SK-N-SH (cell line): ENCODE measurements at regions of chr13 and their contacts with region 1.

Region 1: GRCh38 chr13:20713751-20714150 is 10.3 kb downstream of the IL17D start:
- DNase-seq: no peak
- H3K4me3 ChIP-seq: no peak overlapping the region
- H3K27ac ChIP-seq: peak overlapping the region in 1 of 2 experiments; percentile 86; a peak in 3 of 4 replicates
- H3K4me1 ChIP-seq: peaks cover 0 to 27% of the 10 kb centered on the region in 2 experiments; a peak in 3 of 4 replicates
- H3K27me3 ChIP-seq: no peaks in the 10 kb centered on the region
- CTCF ChIP-seq: no peak
- EP300 ChIP-seq: no peak
- RAD21 ChIP-seq: no peak

Region 2: DNA sequence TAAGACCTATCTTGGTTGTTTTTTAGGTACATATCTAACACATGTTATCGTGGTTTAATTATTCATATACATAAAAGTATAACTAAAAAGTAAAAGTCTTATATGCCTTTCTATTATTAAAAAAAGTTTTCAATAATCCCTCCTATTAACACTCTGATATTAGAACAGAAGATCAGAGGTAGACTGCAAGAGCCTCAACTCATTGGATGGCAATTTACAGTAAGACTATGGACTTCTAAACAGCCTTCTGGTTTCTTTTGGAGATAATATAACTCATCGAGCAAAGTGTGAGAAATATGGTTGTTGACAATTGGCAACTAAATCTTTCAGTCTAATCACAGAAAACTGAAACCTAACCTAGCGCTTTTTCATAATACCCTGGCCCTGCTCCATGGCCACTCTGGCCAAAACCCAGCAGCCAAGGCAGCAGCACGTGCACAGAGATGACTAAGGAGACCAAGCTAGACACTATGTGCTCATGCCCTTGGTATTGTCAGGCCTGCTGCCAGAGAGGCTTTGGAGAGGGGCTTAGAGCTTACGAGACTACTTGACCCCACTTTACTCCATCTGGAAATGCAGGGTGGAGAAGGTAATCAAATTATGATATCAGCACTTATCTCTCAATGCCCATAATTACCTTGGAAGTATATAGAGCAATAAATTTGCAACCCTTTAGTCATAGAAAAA is 100.6 kb after region 1 on chr13:
- CTCF ChIA-PET with region 1: interaction called, 11 read pairs
- POLR2A ChIA-PET with region 1: no interaction called
- DNase-seq: peak; percentile 58
- H3K4me3 ChIP-seq: peak overlapping the region in 1 of 2 experiments; percentile 36; a peak in 2 of 4 replicates
- H3K27ac ChIP-seq: peak overlapping the region; percentile 72 to 96
- H3K4me1 ChIP-seq: peaks cover 18 to 21% of the 10 kb centered on the region in 2 experiments
- H3K27me3 ChIP-seq: no peaks in the 10 kb centered on the region
- CTCF ChIP-seq: no peak
- EP300 ChIP-seq: peak; percentile 40 to 72; a peak in 3 of 4 replicates
- RAD21 ChIP-seq: no peak